HepG2 (cell line): ENCODE measurements at regions of chr6 and their contacts with region 1.

Region 1: DNA sequence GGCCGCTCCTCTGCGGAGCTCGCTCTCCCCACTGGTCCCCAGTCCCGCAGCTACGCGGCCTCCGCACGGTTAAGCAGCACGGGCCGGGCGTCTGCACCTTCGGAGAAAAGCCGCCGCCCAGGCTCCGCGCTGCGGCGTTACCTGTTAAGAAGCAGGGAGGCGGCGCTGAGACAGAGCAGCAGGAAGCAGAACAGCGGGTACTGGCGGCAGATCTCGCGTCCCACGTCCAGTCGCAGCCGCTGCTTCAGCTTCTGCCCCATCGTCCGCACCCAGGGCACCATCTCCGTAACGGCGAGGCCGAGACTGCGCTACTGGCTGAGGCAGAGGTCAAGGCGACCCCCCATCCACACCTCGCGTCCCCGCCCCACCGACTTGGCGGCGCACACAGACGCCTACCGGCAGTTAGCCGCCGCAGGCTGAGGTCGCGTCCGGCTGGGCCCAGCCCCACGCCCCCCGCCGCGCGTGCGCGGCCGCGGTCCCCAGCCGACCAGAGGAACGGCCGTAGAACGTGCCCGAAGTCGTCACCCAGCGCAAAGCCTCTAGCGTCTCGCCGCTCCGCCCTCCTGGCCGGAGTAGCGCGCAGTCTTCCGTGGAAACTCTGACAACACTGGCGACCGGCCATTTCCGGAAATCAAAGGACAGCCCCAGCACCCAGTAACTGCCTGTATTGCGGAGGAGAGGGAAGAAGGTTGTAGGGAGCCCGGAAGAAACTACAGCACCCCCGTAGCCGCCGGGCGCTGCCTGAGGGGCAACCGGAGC is at the start of gene SNX14:
- DNase-seq: peak; percentile 89
- ATAC-seq: peak; percentile 93
- H3K4me3 ChIP-seq: peak within 1 kb of the TSS; percentile 70 to 89 (median 80)
- H3K27ac ChIP-seq: peak within 1 kb of the TSS; percentile 95
- H3K4me1 ChIP-seq: peaks cover 34% of the 10 kb centered on the region
- H3K27me3 ChIP-seq: peaks cover 0 to 4% of the 10 kb centered on the region in 2 experiments; a peak in 1 of 5 replicates
- CTCF ChIP-seq: peak; percentile 41
- EP300 ChIP-seq: 0 out of 4 replicates have a peak, but pooled peaks of 1 of the 2 experiments have one; percentile 9
- POLR2A ChIP-seq: peak in 1 of 2 experiments; percentile 86; a peak in 3 of 4 replicates
- RAD21 ChIP-seq: peak; percentile 17
- total RNA-seq, gene SNX14: 61.9 and 112 TPM in 2 replicates

Region 2: GRCh38 chr6:85556992-85557668 is 36.5 kb before region 1 on chr6:
- CTCF ChIA-PET with region 1: no interaction called
- POLR2A ChIA-PET with region 1: no interaction called
- in situ Hi-C with region 1: no loop called
- intact Hi-C with region 1: loop called (anchors 5 kb)
- DNase-seq: no peak
- ATAC-seq: no peak
- H3K4me3 ChIP-seq: no peak overlapping the region
- H3K27ac ChIP-seq: no peak overlapping the region
- H3K4me1 ChIP-seq: no peaks in the 10 kb centered on the region
- H3K27me3 ChIP-seq: no peaks in the 10 kb centered on the region
- CTCF ChIP-seq: no peak
- EP300 ChIP-seq: no peak
- POLR2A ChIP-seq: no peak
- RAD21 ChIP-seq: no peak

Region 3: GRCh38 chr6:85580882-85581267 is 12.7 kb before region 1 on chr6:
- CTCF ChIA-PET with region 1: no interaction called
- POLR2A ChIA-PET with region 1: interaction called, 10 read pairs
- in situ Hi-C with region 1: no loop called
- intact Hi-C with region 1: no loop called
- DNase-seq: peak; percentile 54
- ATAC-seq: peak; percentile 90
- H3K4me3 ChIP-seq: peak overlapping the region in 1 of 3 experiments; percentile 15; a peak in 1 of 6 replicates
- H3K27ac ChIP-seq: peak overlapping the region; percentile 45
- H3K4me1 ChIP-seq: peaks cover 43% of the 10 kb centered on the region
- H3K27me3 ChIP-seq: no peaks in the 10 kb centered on the region
- CTCF ChIP-seq: no peak
- EP300 ChIP-seq: no peak
- POLR2A ChIP-seq: no peak
- RAD21 ChIP-seq: 0 out of 2 replicates have a peak, but pooled peaks have one; percentile 8

Region 4: GRCh38 chr6:85610182-85610895 is 16.7 kb after region 1 on chr6:
- CTCF ChIA-PET with region 1: no interaction called
- POLR2A ChIA-PET with region 1: interaction called, 5 read pairs
- in situ Hi-C with region 1: no loop called
- intact Hi-C with region 1: loop called (anchors 2 kb)
- DNase-seq: no peak
- ATAC-seq: no peak
- H3K4me3 ChIP-seq: no peak overlapping the region
- H3K27ac ChIP-seq: no peak overlapping the region
- H3K4me1 ChIP-seq: no peaks in the 10 kb centered on the region
- H3K27me3 ChIP-seq: no peaks in the 10 kb centered on the region
- CTCF ChIP-seq: no peak
- EP300 ChIP-seq: no peak
- POLR2A ChIP-seq: no peak
- RAD21 ChIP-seq: no peak

Region 5: DNA sequence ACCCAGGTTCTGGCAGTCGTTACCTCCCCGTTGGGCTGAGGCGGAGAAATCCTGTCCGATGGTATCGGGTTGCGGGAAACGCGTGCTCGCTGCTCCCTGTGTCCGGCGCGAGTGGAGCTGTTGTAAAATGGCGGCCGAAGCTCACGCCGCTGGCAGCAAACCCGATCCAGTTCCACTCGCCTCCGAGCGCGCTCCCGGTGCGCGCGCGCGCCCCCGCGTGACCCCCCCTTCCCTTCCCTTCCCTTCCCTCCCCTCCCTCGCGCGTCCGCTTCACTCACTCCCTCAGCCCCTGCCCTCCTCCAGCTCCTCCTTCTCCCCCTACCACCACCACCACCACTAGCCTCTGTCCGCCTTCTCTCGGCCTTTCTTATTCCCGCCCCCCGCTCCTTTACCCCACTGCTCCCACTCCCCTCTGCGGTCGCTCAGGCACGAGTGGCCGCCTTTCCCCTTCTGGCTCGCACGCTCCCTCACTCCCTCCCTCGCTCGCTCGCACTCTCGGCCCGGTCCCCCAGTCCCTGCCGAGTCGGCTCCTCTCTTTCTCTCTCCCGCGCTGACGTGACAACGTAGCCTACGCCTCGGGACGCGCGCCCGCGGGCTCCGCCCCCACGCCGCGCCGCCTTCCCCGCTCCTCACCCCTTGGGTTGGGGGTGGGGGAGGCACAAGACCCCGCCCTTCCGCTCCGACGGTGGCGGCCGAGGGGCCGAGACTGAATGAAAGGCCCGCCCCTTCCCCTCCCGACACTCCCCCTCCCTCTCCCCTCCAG is 49.3 kb after region 1 on chr6 and contains the start of gene SYNCRIP:
- CTCF ChIA-PET with region 1: no interaction called
- POLR2A ChIA-PET with region 1: interaction called, 54 read pairs
- in situ Hi-C with region 1: no loop called
- intact Hi-C with region 1: loop called (anchors 2 kb)
- DNase-seq: peak; percentile 95
- ATAC-seq: peak; percentile 83
- H3K4me3 ChIP-seq: peak within 1 kb of the TSS; percentile 78 to 96 (median 96)
- H3K27ac ChIP-seq: peak within 1 kb of the TSS; percentile 99
- H3K4me1 ChIP-seq: peaks cover 38% of the 10 kb centered on the region
- H3K27me3 ChIP-seq: no peaks in the 10 kb centered on the region; a peak in 1 of 5 replicates
- CTCF ChIP-seq: peak; percentile 17; the same call in 1 of the 2 replicates
- EP300 ChIP-seq: peak in 1 of 2 experiments; percentile 30; a peak in 1 of 4 replicates
- POLR2A ChIP-seq: peak; percentile 79 to 97
- RAD21 ChIP-seq: no peak
- total RNA-seq, gene SYNCRIP: 112 and 183 TPM in 2 replicates

Region 6: DNA sequence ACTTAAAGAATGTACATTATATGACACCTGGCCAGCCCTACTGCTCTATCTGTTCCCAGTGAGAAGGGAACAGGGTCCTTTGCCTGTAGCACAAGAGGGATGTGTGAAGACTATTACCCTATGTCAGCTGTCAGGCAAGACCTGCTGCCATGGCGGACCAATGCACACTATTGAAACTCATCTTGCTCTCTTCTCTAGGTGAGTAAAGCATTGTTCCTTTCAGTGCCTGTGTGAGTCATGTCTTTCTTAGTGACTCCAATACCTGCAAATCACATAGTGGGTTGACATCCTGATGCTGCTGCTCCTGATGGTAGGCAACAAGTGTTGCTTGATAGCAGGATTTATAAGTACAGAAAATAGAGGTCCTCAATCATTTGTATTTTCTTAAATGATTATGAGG is 97.9 kb after region 1 on chr6:
- CTCF ChIA-PET with region 1: no interaction called
- POLR2A ChIA-PET with region 1: no interaction called
- in situ Hi-C with region 1: no loop called
- intact Hi-C with region 1: no loop called
- DNase-seq: no peak
- ATAC-seq: no peak
- H3K4me3 ChIP-seq: no peak overlapping the region
- H3K27ac ChIP-seq: no peak overlapping the region
- H3K4me1 ChIP-seq: no peaks in the 10 kb centered on the region
- H3K27me3 ChIP-seq: peaks cover 0 to 5% of the 10 kb centered on the region in 2 experiments; a peak in 1 of 5 replicates
- CTCF ChIP-seq: no peak
- EP300 ChIP-seq: no peak
- POLR2A ChIP-seq: no peak
- RAD21 ChIP-seq: no peak